H1 (cell line): ENCODE measurements at regions of chr10 and their contacts with region 1.

Region 1: GRCh38 chr10:86155054-86155921 is 211.3 kb downstream of the GRID1 start:
- DNase-seq: no peak
- H3K4me3 ChIP-seq: no peak overlapping the region
- H3K27ac ChIP-seq: no peak overlapping the region
- H3K4me1 ChIP-seq: no peaks in the 10 kb centered on the region; a peak in 1 of 7 replicates
- H3K27me3 ChIP-seq: no peaks in the 10 kb centered on the region
- CTCF ChIP-seq: peak; percentile 23 to 30 (median 30); a peak in 3 of 4 replicates
- EP300 ChIP-seq: no peak
- POLR2A ChIP-seq: no peak
- RAD21 ChIP-seq: peak; percentile 23 to 32; a peak in 3 of 4 replicates

Region 2: DNA sequence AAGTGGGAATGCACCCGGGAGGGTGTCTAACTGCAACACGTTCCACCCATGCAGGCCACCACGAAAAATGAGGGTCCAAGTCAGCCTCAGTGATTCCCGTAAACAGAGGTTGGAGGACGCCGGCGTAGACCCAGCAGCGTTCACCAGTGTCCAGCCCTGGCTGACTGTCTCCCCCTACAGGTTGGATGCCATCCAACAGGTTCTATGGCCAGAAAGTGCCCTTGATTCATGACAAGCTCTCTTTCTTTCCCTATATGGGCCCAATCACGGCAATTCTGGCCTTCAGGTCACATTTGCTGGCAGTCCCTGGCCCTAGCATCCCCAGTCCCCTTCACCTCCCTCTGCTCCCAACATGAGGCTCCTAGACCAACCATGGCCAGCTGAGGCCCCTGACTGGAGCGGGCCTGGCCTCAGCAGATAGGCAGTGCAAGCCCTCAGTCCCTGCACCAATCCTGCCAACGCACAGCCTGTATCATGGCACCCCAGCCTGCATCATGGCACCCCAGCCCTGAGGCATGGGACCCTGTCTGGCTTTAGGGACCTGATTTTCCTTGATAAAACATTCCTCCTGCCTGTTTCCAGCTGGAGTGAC is 16.1 kb before region 1 on chr10:
- CTCF ChIA-PET with region 1: interaction called, 13 read pairs
- POLR2A ChIA-PET with region 1: no interaction called
- DNase-seq: peak; percentile 17 to 84
- H3K4me3 ChIP-seq: no peak overlapping the region
- H3K27ac ChIP-seq: no peak overlapping the region
- H3K4me1 ChIP-seq: no peaks in the 10 kb centered on the region
- H3K27me3 ChIP-seq: no peaks in the 10 kb centered on the region
- CTCF ChIP-seq: peak; percentile 85 to 94 (median 92)
- EP300 ChIP-seq: no peak
- POLR2A ChIP-seq: no peak
- RAD21 ChIP-seq: peak; percentile 87 to 88